ENCODE measurements at regions of chr22 and their contacts with region 1.

Region 1: GRCh38 chr22:39013942-39014722 is at the start of gene APOBEC3C:
- DNase-seq: peak; percentile 86
- H3K4me3 ChIP-seq: peak within 1 kb of the TSS; percentile 62 to 73 (median 62)
- H3K27ac ChIP-seq: peak within 1 kb of the TSS; percentile 38
- H3K4me1 ChIP-seq: peaks cover 17% of the 10 kb centered on the region
- H3K27me3 ChIP-seq: no peaks in the 10 kb centered on the region
- CTCF ChIP-seq: peak in 1 of 2 donors; percentile 22
- total RNA-seq, gene APOBEC3C: 30.5 to 151 TPM

Region 2: DNA sequence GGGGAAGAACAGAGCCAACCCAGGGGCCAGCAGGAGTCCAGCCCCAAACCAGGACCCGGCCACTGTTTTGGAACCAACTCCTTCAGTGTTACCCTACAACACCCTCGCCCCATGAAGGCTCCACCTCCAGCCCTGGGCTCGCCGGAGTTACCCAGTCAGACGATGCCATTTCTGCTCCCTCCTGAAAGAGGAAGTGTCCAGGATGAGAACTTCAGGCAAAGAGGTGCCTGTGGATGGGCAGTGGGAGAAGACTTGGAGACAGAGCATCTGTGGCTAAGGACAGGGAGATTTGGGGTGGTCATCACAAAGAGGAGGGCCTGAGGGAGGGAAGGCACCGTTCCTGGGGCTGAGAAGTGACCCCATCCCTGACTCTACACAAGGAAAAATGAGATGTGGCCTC is 18.0 kb before region 1 on chr22:
- CTCF ChIA-PET with region 1: no interaction called
- dilution Hi-C with region 1: no loop called
- in situ Hi-C with region 1: no loop called
- intact Hi-C with region 1: no loop called
- DNase-seq: no peak
- H3K4me3 ChIP-seq: no peak overlapping the region
- H3K27ac ChIP-seq: no peak overlapping the region
- H3K4me1 ChIP-seq: no peaks in the 10 kb centered on the region
- H3K27me3 ChIP-seq: no peaks in the 10 kb centered on the region
- CTCF ChIP-seq: no peak

Region 3: GRCh38 chr22:39039306-39040126 is 25.4 kb after region 1 on chr22:
- CTCF ChIA-PET with region 1: no interaction called
- dilution Hi-C with region 1: no loop called
- in situ Hi-C with region 1: no loop called
- intact Hi-C with region 1: loop called (anchors 2 kb)
- DNase-seq: no peak
- H3K4me3 ChIP-seq: no peak overlapping the region
- H3K27ac ChIP-seq: no peak overlapping the region
- H3K4me1 ChIP-seq: peaks cover 6% of the 10 kb centered on the region
- H3K27me3 ChIP-seq: no peaks in the 10 kb centered on the region
- CTCF ChIP-seq: no peak

Measured in mammary epithelial cell (primary cell).